ENCODE measurements at regions of chr15 and their contacts with region 1.

Region 1: DNA sequence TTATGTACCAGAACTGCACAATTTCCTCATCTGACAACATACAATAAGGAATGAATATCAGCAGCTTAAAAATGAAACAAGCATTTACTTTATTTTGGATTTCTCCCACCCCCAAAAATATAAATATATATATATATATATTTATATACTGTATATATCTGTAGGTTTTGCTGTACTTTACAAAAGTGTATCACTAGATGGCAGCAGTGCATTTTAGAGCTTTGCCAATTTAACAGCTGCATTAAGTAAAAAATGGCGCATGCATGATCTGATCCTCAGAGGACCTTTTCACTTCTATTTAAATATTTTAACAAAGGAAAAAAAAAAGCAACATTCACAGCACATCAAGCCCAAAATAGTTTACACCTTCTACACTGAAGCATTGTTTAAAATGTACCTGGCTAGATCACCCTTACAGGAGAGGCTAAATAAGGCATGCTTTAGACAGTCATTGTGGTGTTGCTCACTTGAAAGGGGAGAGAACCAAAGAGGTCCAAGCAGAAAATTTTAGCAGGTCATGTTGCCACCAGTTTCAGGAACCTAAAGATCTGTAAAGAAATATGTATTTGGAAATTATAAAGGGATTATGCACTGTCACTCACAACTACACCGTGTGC is 72.6 kb downstream of the NPTN start:
- DNase-seq: peak; percentile 61
- ATAC-seq: peak; percentile 44; the same call in 2 of the 3 replicates
- H3K4me3 ChIP-seq: no peak overlapping the region
- H3K27ac ChIP-seq: no peak overlapping the region
- H3K4me1 ChIP-seq: no peaks in the 10 kb centered on the region
- H3K27me3 ChIP-seq: no peaks in the 10 kb centered on the region
- CTCF ChIP-seq: peak; percentile 43
- EP300 ChIP-seq: no peak
- POLR2A ChIP-seq: no peak
- RAD21 ChIP-seq: no peak

Region 2: DNA sequence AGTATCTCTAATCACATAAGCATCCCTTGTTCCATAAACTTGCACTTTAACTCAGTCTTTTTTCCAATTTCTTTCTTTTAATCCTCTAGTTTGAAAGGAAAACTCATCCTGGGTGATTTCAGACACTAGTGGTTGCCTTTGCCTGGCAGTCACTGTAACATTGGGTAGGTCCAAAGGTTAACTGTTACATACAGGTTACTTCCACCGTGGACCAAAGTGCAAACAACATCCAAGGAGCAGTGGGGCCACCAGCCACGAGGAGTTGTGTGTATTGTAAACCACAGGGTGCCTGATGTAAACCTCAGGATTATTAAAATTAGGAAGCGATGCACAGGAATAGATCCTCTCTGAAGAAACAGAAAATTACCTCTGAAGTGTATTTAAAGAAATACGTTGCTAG is 266.8 kb before region 1 on chr15:
- CTCF ChIA-PET with region 1: no interaction called
- POLR2A ChIA-PET with region 1: no interaction called
- in situ Hi-C with region 1: no loop called
- intact Hi-C with region 1: no loop called
- DNase-seq: peak; percentile 59
- ATAC-seq: peak; percentile 62; the same call in 1 of the 3 replicates
- H3K4me3 ChIP-seq: no peak overlapping the region
- H3K27ac ChIP-seq: peak overlapping the region; percentile 46
- H3K4me1 ChIP-seq: peaks cover 29% of the 10 kb centered on the region
- H3K27me3 ChIP-seq: no peaks in the 10 kb centered on the region; a peak in 1 of 5 replicates
- CTCF ChIP-seq: no peak
- EP300 ChIP-seq: peak in 1 of 2 experiments; percentile 63; a peak in 2 of 4 replicates
- POLR2A ChIP-seq: no peak
- RAD21 ChIP-seq: no peak

Region 3: GRCh38 chr15:73305331-73306211 is 255.0 kb before region 1 on chr15:
- CTCF ChIA-PET with region 1: no interaction called
- POLR2A ChIA-PET with region 1: no interaction called
- in situ Hi-C with region 1: no loop called
- intact Hi-C with region 1: loop called (anchors 5 kb)
- DNase-seq: peak; percentile 57
- ATAC-seq: peak; percentile 92
- H3K4me3 ChIP-seq: no peak overlapping the region
- H3K27ac ChIP-seq: no peak overlapping the region
- H3K4me1 ChIP-seq: no peaks in the 10 kb centered on the region
- H3K27me3 ChIP-seq: no peaks in the 10 kb centered on the region
- CTCF ChIP-seq: peak; percentile 81
- EP300 ChIP-seq: no peak
- POLR2A ChIP-seq: no peak
- RAD21 ChIP-seq: peak; percentile 62; the same call in 1 of the 2 replicates

Region 4: GRCh38 chr15:73330206-73331051 is 230.2 kb before region 1 on chr15:
- CTCF ChIA-PET with region 1: no interaction called
- POLR2A ChIA-PET with region 1: no interaction called
- in situ Hi-C with region 1: no loop called
- intact Hi-C with region 1: no loop called
- DNase-seq: no peak
- ATAC-seq: peak; percentile 30
- H3K4me3 ChIP-seq: no peak overlapping the region
- H3K27ac ChIP-seq: no peak overlapping the region
- H3K4me1 ChIP-seq: no peaks in the 10 kb centered on the region
- H3K27me3 ChIP-seq: peaks cover 3 to 22% of the 10 kb centered on the region in 2 experiments; a peak in 4 of 5 replicates
- CTCF ChIP-seq: no peak
- EP300 ChIP-seq: no peak
- POLR2A ChIP-seq: no peak
- RAD21 ChIP-seq: no peak

Region 5: DNA sequence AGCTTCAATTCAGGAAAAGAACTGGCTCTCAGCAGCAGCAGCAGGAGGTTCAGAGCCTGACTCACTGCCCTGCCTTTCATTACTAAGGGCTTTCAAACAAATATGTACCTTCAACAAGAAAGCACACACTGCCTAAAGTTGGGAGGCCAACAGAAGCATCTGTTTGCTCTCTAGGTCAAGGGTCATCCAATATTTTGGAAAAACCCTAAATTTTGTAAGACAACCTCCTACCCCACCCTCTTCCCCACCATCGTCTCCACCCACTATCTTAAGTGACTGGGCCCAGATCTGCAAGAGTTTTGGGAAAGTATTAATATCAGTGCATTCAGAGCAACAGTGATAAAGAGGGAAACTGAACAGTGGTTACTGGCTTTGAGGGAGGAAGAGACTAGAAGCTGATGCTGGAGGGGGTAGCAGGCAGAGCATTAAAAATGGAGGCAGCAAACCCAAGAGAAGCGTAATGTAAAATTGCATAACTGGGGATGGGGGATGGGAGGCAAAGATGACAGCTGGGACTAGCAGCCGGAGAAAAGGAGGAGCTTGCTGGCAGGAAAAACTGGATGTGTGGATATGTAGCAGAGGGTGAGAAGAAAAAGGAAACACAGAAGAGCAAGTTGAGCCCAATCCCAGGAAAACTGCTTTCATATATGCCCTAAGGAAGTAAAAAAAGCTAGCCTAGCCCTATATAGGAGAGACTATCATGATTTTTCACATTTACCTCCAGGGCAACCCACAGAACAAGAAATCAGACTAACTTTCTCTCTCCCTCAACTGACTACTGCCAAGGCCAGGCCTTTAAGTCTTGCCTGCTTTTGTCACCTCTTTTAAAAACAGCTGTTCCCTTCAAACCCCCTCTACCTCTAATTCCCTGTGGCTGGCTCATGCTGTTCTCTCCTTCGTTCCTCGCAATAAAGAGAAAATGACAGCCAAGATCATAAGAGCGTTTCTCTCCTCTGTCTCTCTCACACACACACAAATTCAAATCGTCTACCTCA is 41.1 kb after region 1 on chr15:
- CTCF ChIA-PET with region 1: no interaction called
- POLR2A ChIA-PET with region 1: no interaction called
- in situ Hi-C with region 1: no loop called
- intact Hi-C with region 1: no loop called
- DNase-seq: peak; percentile 33
- ATAC-seq: peak; percentile 91
- H3K4me3 ChIP-seq: 0 out of 6 replicates have a peak overlapping the region, but pooled peaks of 1 of the 3 experiments have one; percentile 5
- H3K27ac ChIP-seq: peak overlapping the region; percentile 21
- H3K4me1 ChIP-seq: peaks cover 54% of the 10 kb centered on the region
- H3K27me3 ChIP-seq: no peaks in the 10 kb centered on the region
- CTCF ChIP-seq: no peak
- EP300 ChIP-seq: no peak
- POLR2A ChIP-seq: no peak
- RAD21 ChIP-seq: no peak

Measured in HepG2 (cell line).